Heart left ventricle (tissue), 16 donors: ENCODE measurements at regions of chr10 and their contacts with region 1.

Region 1: GRCh38 chr10:121974535-121975294 is at the start of gene NSMCE4A:
- DNase-seq: peak; percentile 83 to 91 (median 85)
- ATAC-seq: peak; percentile 75 to 95 (median 90)
- H3K4me3 ChIP-seq: peak within 1 kb of the TSS; percentile 81 to 100 (median 97)
- H3K27ac ChIP-seq: peak within 1 kb of the TSS; percentile 97 to 100 (median 98)
- H3K4me1 ChIP-seq: peaks cover 0 to 27% (median 18%) of the 10 kb centered on the region in 12 donors
- H3K27me3 ChIP-seq: no peaks in the 10 kb centered on the region
- CTCF ChIP-seq: peak in 4 of 12 donors; percentile 41 to 84 (median 64)
- POLR2A ChIP-seq: peak in 1 of 2 donors; percentile 60
- total RNA-seq, gene NSMCE4A: 19.8 to 33.6 (median 25.6) TPM

Region 2: DNA sequence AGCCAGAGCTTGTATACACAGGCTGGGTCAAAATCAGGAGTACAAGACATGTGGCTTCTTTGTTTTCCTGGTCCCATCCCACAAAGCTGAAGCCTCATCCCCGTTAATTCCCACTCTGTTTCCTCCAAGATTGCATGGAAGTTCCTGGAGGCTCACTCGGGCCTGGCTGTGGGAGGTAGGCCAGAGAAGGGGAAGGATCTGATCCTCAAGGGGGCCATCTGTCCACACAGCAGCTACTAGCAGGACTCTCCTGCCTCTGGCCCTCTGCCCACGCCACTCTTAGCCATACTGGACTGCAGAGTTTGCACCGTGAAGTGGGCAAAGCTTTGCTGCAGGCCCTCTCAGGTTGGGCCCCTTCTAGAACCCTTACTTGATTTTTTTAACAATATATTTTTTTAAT is 537.1 kb before region 1 on chr10:
- intact Hi-C with region 1: no loop called
- DNase-seq: peak in 3 of 5 donors; percentile 9 to 31 (median 18)
- ATAC-seq: peak in 1 of 4 donors; percentile 52
- H3K4me3 ChIP-seq: no peak overlapping the region
- H3K27ac ChIP-seq: no peak overlapping the region
- H3K4me1 ChIP-seq: no peaks in the 10 kb centered on the region
- H3K27me3 ChIP-seq: no peaks in the 10 kb centered on the region
- CTCF ChIP-seq: no peak
- POLR2A ChIP-seq: no peak

Region 3: DNA sequence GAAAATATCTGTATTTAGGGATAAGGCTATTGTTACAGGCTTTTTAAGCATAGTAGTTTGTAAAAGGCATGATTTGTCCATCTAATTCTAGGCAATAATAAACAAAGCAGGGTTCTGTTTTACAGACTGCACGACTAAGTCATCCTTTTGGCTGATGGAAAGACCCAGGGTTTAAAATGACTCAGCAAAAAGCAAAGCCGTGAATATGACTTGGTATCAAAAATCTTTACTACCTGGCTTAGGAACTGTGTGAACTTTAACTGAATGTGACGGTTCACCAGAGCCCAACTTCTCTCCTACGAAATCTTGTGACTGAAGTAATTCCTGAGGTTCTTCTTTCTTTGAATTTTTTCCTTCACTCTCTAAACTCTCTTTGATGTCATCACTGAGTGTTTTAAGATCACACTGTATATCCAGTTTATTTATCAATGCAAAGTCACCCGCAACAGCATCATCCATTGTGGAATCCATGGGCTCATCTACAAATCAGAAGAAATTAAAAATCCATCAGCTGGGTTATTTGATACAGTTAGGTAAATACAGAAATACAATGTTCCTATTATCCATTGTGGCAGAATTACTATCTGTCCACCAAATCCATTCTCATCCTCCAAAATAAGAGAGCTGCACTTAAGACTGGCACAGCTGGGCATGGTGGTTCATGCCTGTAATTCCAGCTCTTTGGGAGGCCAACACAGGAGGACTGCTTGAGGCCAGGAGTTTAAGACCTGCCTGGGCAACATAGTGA is 63.9 kb before region 1 on chr10:
- intact Hi-C with region 1: no loop called
- DNase-seq: no peak
- ATAC-seq: no peak
- H3K4me3 ChIP-seq: no peak overlapping the region
- H3K27ac ChIP-seq: peak overlapping the region in 1 of 12 donors; percentile 19
- H3K4me1 ChIP-seq: peaks cover 0 to 19% (median 5%) of the 10 kb centered on the region in 12 donors
- H3K27me3 ChIP-seq: no peaks in the 10 kb centered on the region
- CTCF ChIP-seq: no peak
- POLR2A ChIP-seq: no peak

Region 4: DNA sequence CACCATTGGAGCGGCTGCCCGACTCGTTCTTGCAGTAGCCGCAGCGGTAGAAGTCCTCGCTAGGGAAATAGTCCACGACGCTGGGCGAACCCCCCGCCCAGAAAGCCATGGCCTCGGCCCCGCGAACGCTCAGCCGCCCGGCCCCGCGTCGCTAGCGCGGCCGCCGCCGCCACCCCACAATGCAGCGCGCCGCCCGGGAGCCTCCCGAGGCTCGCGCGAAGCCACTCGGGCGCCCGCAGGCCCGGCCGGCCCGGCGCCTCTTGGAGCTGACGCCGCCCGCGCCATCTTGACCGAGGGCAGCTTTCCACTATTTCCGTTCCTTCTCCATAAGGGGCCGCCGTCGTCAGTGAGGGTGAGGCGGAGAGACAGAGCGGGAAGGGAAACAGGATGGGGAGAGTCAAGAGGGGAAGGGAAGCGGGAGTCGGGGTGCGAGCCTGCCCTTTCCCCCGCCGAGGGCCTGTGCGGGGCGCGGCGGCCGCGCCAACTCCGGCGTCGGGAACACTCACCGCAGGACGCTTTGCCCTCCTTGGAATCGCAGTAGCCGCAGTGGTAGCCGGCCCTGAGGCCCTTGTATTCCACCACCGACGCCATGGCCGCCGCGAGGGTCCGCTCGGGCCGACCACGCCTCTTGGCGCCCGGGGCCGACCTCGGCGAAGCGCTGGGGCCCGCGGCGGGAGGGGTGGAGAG is 46.7 kb before region 1 on chr10 and contains the start of gene ATE1:
- intact Hi-C with region 1: loop called in 8 of 10 experiments (anchors 2 to 5 kb)
- DNase-seq: peak; percentile 92 to 95 (median 94)
- ATAC-seq: peak; percentile 91 to 98 (median 96)
- H3K4me3 ChIP-seq: peak within 1 kb of the TSS; percentile 82 to 100 (median 94)
- H3K27ac ChIP-seq: peak within 1 kb of the TSS; percentile 90 to 100 (median 98)
- H3K4me1 ChIP-seq: peaks cover 0 to 41% (median 18%) of the 10 kb centered on the region in 12 donors
- H3K27me3 ChIP-seq: no peaks in the 10 kb centered on the region
- CTCF ChIP-seq: peak in 6 of 12 donors; percentile 10 to 46 (median 26)
- POLR2A ChIP-seq: peak in 1 of 2 donors; percentile 73
- total RNA-seq, gene ATE1: 30.3 to 50.1 (median 40.4) TPM

Region 5: DNA sequence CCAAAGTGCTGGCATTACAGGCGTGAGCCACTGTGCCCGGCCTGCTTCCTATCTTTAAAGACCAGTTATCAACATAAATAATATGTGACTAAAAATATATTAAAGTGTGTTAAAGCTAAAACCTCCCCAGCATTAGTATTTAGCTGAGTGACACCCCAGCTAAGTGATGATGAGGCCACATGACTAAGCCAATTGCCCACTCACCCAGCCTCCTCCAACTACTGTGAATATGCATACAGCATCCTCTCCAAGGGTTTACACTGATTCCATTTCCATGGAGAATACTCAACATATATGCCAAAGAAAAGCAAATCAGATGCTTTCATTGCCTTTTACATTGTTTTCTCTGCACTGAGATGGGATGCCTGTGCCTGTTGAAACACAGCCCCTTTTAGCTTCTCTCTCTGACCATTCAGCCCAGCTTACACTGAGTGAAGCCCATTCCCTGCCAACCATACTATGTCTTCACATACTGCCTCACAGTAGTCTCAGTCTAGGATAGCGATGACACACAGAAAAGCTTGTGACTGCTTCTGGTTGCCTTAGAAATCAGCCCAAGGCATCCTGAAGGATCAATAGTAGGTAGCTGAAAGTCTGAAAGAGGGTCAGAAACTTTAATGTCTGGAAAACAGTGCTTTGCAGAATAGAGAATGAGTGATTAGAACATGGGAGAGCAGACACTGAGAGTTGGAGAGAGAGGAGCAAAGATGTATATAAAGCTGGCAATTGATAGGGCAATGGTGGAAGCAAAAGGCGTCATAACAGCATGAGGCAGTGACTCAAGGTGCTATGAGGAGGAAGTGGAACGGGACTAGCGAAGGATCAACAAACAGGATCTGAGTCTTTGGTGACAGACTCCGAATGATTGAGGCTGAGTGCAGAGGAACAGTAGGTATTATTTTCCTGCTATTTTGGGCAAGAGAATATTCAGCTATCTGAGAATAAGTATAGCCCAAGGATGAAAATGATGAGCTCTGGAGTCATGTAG is 27.1 kb before region 1 on chr10:
- intact Hi-C with region 1: loop called in 1 of 10 experiments (anchors 2 kb)
- DNase-seq: no peak
- ATAC-seq: no peak
- H3K4me3 ChIP-seq: no peak overlapping the region
- H3K27ac ChIP-seq: no peak overlapping the region
- H3K4me1 ChIP-seq: peaks cover 0 to 10% (median 6%) of the 10 kb centered on the region in 12 donors
- H3K27me3 ChIP-seq: no peaks in the 10 kb centered on the region
- CTCF ChIP-seq: no peak
- POLR2A ChIP-seq: no peak

Region 6: DNA sequence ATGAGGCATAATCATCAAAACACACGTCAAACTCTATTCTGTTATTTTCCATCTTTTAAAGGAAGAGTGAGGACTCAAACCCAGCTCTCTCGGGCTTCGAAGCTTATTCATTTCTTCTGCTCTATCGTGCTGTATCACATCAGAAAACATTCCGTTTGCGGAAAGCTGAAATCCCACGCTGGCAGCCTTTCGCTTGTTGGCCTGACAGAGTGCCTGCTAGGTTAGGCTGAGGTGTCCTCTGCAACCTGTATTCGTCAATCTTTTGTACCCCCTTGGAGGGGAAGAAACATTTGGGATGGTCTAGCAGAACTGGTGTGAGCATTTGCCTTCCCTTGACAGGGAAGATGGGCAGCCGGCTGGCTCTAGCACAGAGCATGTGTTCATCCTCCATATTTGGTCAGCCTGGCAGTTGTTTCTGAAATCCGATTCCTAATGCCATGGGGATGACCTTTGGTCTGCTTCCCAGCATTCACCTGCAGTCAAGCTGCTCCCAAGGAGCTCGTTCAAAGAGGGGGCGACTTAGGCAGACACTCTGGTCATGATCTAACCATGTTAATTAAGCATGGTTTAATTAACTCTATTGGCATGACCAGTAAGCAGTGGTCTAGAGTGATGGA is 69.4 kb after region 1 on chr10:
- intact Hi-C with region 1: loop called in 2 of 10 experiments (anchors 5 to 10 kb)
- DNase-seq: peak in 4 of 5 donors; percentile 35 to 61 (median 52)
- ATAC-seq: peak; percentile 78 to 87 (median 84)
- H3K4me3 ChIP-seq: peak overlapping the region in 1 of 12 donors; percentile 3
- H3K27ac ChIP-seq: peak overlapping the region; percentile 12 to 88 (median 64)
- H3K4me1 ChIP-seq: peaks cover 0 to 46% (median 18%) of the 10 kb centered on the region in 12 donors
- H3K27me3 ChIP-seq: no peaks in the 10 kb centered on the region
- CTCF ChIP-seq: no peak
- POLR2A ChIP-seq: no peak

Region 7: DNA sequence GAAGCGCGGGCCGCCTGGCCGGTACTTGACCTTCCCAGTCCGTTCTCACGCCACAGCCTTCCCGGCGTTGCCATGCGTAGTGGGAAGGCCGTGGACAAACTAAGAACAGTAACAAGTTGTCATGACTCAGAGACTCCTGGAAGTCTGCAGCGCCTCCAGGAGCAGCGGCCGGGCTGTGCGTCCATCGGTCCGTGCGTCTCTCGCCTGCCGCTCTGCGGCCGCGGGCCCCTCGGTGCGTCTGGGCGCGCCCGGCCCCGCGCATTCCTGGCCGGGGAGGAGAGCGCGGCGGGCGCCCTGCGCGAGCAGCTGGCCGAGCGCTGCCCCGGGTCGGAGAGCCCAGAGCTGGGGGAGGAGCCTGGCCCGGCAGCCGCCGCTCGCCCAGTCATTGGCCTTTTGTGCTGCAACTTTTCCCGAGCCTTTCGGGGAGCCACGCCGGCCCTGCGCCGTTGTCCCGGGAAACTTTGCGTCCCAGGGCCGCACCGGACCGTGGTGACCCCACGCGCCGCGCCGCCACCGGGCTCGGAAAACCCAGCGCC is 138.0 kb after region 1 on chr10:
- intact Hi-C with region 1: loop called in 4 of 10 experiments (anchors 2 to 10 kb)
- DNase-seq: peak; percentile 86 to 94 (median 91)
- ATAC-seq: peak; percentile 54 to 90 (median 83)
- H3K4me3 ChIP-seq: peak overlapping the region; percentile 64 to 92 (median 81)
- H3K27ac ChIP-seq: peak overlapping the region; percentile 97 to 100 (median 99)
- H3K4me1 ChIP-seq: peaks cover 4 to 56% (median 42%) of the 10 kb centered on the region in 12 donors
- H3K27me3 ChIP-seq: peaks cover 0 to 16% (median 0%) of the 10 kb centered on the region in 9 donors
- CTCF ChIP-seq: peak; percentile 25 to 79 (median 54)
- POLR2A ChIP-seq: peak in 1 of 2 donors; percentile 67